ENCODE measurements at regions of chr2 and their contacts with region 1.

Region 1: GRCh38 chr2:21543630-21544029 is 419.9 kb downstream of the TDRD15 start:
- DNase-seq: no peak
- H3K4me3 ChIP-seq: no peak overlapping the region
- H3K27ac ChIP-seq: no peak overlapping the region
- H3K4me1 ChIP-seq: no peaks in the 10 kb centered on the region
- H3K27me3 ChIP-seq: no peaks in the 10 kb centered on the region
- CTCF ChIP-seq: no peak

Region 2: GRCh38 chr2:21585881-21586280 is 42.3 kb after region 1 on chr2:
- CTCF ChIA-PET with region 1: no interaction called
- dilution Hi-C with region 1: loop called (anchors 5 kb)
- in situ Hi-C with region 1: no loop called
- intact Hi-C with region 1: no loop called
- DNase-seq: no peak
- H3K4me3 ChIP-seq: no peak overlapping the region
- H3K27ac ChIP-seq: no peak overlapping the region
- H3K4me1 ChIP-seq: no peaks in the 10 kb centered on the region
- H3K27me3 ChIP-seq: no peaks in the 10 kb centered on the region
- CTCF ChIP-seq: no peak

Region 3: DNA sequence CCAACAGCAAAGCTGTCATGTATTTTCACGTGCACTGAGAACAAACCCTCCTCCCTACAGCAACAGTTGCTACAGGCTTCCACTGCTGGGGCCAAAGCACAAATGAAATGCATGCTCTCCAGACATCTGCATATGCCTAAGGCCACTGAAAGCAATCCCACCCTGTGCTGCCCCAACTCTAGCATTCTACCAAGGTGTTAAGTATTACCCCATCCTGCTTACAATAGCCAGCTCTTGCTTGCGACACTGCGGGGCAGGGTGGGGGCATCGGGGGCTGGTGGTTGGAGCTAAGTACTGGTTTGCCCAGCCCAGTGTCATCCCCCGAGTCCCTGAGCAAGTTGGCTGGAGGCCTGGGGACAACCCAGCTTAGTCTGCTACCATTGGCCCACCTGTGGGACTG is 322.7 kb after region 1 on chr2:
- CTCF ChIA-PET with region 1: no interaction called
- dilution Hi-C with region 1: no loop called
- in situ Hi-C with region 1: no loop called
- intact Hi-C with region 1: no loop called
- DNase-seq: no peak
- H3K4me3 ChIP-seq: no peak overlapping the region
- H3K27ac ChIP-seq: no peak overlapping the region
- H3K4me1 ChIP-seq: no peaks in the 10 kb centered on the region
- H3K27me3 ChIP-seq: no peaks in the 10 kb centered on the region
- CTCF ChIP-seq: no peak

Measured in mammary epithelial cell (primary cell).